ENCODE measurements at regions of chr5 and their contacts with region 1.

Region 1: DNA sequence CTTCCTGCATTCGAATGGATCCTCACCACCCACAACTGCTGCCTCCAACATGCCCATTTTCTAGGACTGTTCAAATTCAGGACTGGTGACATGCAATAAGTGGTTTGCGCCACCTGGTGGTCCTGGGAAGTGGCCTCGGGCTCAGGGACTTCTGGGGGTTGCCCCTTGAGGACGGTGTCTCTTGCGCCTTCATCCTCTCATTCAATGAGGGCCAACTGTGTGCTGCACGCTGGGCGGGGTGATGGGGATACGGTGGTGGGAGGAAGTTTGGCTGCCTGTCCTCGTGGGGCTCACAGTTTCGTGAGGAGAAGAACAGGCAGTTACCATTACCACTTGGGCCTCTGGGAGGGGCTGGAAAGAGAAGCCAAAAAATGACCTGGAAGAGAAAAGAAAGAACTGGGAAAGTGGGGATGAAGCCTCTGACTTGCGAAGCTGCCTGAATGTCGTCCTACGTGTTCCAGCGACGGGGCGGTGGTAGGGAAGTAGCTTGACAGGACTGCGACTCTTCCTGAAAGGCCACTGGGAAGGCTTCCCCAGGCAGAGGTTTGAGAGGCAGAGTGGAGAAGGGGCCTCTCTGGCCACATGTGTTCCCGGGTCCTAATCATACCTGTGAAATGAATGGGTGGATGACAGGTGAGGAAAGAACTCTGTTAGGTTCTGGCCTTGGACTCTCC is 49.0 kb downstream of the PSD2 start:
- DNase-seq: peak; percentile 56 to 75 (median 64)
- H3K4me3 ChIP-seq: no peak overlapping the region
- H3K27ac ChIP-seq: no peak overlapping the region
- H3K4me1 ChIP-seq: no peaks in the 10 kb centered on the region
- H3K27me3 ChIP-seq: no peaks in the 10 kb centered on the region
- CTCF ChIP-seq: peak in 2 of 3 donors; percentile 19 to 23
- EP300 ChIP-seq: no peak
- POLR2A ChIP-seq: no peak

Region 2: GRCh38 chr5:139795074-139796001 is 49.3 kb before region 1 on chr5 and contains the start of gene PSD2:
- intact Hi-C with region 1: loop called in 2 of 4 experiments (anchors 5 to 10 kb)
- DNase-seq: peak; percentile 48 to 64 (median 58)
- H3K4me3 ChIP-seq: peak within 1 kb of the TSS; percentile 11
- H3K27ac ChIP-seq: no peak within 1 kb of the TSS
- H3K4me1 ChIP-seq: no peaks in the 10 kb centered on the region
- H3K27me3 ChIP-seq: no peaks in the 10 kb centered on the region
- CTCF ChIP-seq: no peak
- EP300 ChIP-seq: no peak
- POLR2A ChIP-seq: no peak
- total RNA-seq, gene PSD2: 0.05 to 0.37 (median 0.13) TPM in 5 of 7 donors, not detected in the others

Region 3: DNA sequence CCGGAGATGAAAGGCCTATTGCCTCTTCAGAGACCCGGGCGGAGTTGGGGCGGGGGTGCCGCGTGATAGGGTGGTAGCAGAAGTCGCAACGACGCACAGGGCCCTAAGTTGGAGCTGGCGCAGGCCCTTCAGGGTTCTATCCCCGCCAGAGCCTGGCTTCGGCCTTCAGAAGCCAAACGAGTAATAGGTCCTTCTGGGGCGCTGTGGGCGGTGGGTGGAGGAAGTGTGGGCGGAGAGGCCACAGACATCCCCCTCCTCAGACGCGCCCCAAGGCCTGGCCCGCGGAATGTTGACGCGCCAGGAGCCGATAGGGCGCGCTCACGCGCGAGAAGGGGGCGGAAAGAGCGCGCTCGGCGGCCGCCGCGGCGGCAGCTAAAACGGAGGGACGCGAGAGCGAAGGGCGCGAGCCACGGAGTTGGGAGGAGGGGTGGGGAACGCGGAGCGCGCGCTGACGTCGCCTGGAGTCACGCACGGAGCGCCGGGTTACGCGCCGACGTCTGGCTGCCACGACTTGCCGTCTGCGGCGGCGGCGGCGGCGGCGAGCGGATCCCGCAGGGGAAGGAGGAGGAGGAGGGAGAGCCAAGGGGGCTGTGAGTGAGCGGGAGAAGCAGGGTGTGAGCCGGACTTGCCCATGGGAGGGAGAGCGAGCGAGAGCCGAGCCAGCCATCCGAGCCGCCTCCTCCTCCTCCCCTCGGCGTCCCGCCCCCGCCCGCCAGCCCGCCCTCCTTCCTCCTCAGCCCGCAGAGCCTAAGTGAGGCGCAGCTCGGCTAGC is 262.9 kb after region 1 on chr5:
- intact Hi-C with region 1: no loop called
- DNase-seq: peak; percentile 92 to 97 (median 94)
- H3K4me3 ChIP-seq: peak overlapping the region; percentile 83
- H3K27ac ChIP-seq: peak overlapping the region; percentile 86 to 96
- H3K4me1 ChIP-seq: peaks cover 11% of the 10 kb centered on the region
- H3K27me3 ChIP-seq: no peaks in the 10 kb centered on the region
- CTCF ChIP-seq: peak in 2 of 3 donors; percentile 27 to 40
- EP300 ChIP-seq: no peak
- POLR2A ChIP-seq: peak; percentile 90

Region 4: GRCh38 chr5:140145818-140146522 is 301.4 kb after region 1 on chr5:
- intact Hi-C with region 1: loop called in 1 of 4 experiments (anchors 10 kb)
- DNase-seq: peak; percentile 68 to 88 (median 77)
- H3K4me3 ChIP-seq: peak overlapping the region; percentile 31
- H3K27ac ChIP-seq: no peak overlapping the region
- H3K4me1 ChIP-seq: peaks cover 7% of the 10 kb centered on the region
- H3K27me3 ChIP-seq: no peaks in the 10 kb centered on the region
- CTCF ChIP-seq: peak; percentile 67 to 74 (median 73)
- EP300 ChIP-seq: no peak
- POLR2A ChIP-seq: no peak

Region 5: GRCh38 chr5:140174465-140175366 is 330.1 kb after region 1 on chr5 and contains the start of gene CYSTM1:
- intact Hi-C with region 1: no loop called
- DNase-seq: peak; percentile 97 to 99 (median 98)
- H3K4me3 ChIP-seq: peak within 1 kb of the TSS; percentile 80
- H3K27ac ChIP-seq: peak within 1 kb of the TSS; percentile 96 to 98
- H3K4me1 ChIP-seq: peaks cover 4% of the 10 kb centered on the region
- H3K27me3 ChIP-seq: no peaks in the 10 kb centered on the region
- CTCF ChIP-seq: peak in 1 of 3 donors; percentile 25
- EP300 ChIP-seq: peak; percentile 60
- POLR2A ChIP-seq: peak; percentile 96
- total RNA-seq, gene CYSTM1: 24.6 to 143 (median 40.6) TPM

Measured in ovary (tissue), 10 donors.